Common myeloid progenitor, CD34-positive (primary cell): ENCODE measurements at regions of chr6 and their contacts with region 1.

Region 1: GRCh38 chr6:56902641-56903464 is 52.1 kb upstream of the BEND6 start:
- DNase-seq: peak; percentile 34 to 70 (median 61)
- H3K4me3 ChIP-seq: no peak overlapping the region
- H3K27ac ChIP-seq: no peak overlapping the region
- H3K4me1 ChIP-seq: peaks cover 0 to 1% (median 0%) of the 10 kb centered on the region in 4 experiments
- H3K27me3 ChIP-seq: no peaks in the 10 kb centered on the region

Region 2: DNA sequence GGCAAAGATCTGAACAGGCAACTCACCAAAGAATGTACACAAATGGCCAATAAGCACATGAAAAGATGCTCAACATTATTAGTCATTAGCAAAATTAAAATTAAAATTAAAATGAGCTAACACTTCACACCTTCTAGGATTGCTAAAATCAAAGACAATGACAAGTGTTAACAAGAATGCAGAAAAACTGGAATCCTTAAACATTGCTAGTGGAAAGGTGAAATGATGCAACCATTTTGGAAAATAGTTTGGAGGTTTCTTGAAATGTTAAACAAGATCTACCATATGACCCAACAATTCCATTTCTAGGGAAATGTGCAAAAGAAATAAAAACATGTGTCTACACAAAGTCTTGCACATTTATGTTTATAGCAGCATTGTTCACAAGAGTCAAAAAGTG is 184.6 kb before region 1 on chr6:
- CTCF ChIA-PET with region 1: no interaction called
- POLR2A ChIA-PET with region 1: no interaction called
- DNase-seq: no peak
- H3K4me3 ChIP-seq: no peak overlapping the region
- H3K27ac ChIP-seq: no peak overlapping the region
- H3K4me1 ChIP-seq: no peaks in the 10 kb centered on the region
- H3K27me3 ChIP-seq: no peaks in the 10 kb centered on the region

Region 3: GRCh38 chr6:56775498-56776166 is 127.2 kb before region 1 on chr6:
- CTCF ChIA-PET with region 1: no interaction called
- POLR2A ChIA-PET with region 1: no interaction called
- DNase-seq: no peak
- H3K4me3 ChIP-seq: no peak overlapping the region
- H3K27ac ChIP-seq: no peak overlapping the region
- H3K4me1 ChIP-seq: peaks cover 0 to 3% (median 1%) of the 10 kb centered on the region in 4 experiments
- H3K27me3 ChIP-seq: no peaks in the 10 kb centered on the region

Region 4: DNA sequence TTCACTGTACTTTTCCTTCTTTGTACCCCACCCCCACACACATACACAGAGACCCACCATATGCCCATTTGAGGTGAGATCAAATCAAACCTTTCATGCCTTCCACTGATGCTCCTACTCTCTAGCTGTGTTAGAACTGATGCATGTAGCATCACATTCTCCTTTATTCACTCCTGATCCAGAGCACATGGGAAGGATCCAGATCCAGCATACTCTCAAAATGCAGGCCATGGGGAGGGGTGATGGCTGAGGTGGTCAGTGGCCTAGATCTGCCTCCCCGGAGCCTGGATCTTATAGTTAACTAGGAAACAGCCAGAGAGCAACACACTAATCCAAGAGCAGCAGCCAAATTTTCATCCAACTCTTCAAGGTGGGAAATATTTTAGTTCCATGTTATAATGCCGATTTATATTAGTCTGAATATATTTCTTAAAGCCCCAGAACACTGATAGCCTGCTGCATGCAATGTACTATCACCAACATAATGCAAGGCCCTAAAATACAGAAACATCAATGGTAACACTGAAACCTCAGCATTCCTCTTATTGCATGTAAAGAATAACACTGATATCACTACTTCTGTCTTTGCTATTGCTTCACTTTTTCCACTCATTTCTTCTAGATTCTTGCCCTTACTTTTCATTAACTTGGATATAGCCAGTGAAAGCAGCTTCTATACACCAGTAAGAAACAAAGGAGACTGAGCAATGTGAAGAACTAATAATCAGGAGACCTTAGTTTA is 74.8 kb before region 1 on chr6:
- CTCF ChIA-PET with region 1: no interaction called
- POLR2A ChIA-PET with region 1: no interaction called
- DNase-seq: no peak
- H3K4me3 ChIP-seq: no peak overlapping the region
- H3K27ac ChIP-seq: no peak overlapping the region
- H3K4me1 ChIP-seq: no peaks in the 10 kb centered on the region
- H3K27me3 ChIP-seq: no peaks in the 10 kb centered on the region

Region 5: GRCh38 chr6:56890683-56891429 is 12.0 kb before region 1 on chr6:
- CTCF ChIA-PET with region 1: interaction called, 20 read pairs
- POLR2A ChIA-PET with region 1: no interaction called
- DNase-seq: peak; percentile 77 to 94 (median 91)
- H3K4me3 ChIP-seq: no peak overlapping the region
- H3K27ac ChIP-seq: no peak overlapping the region
- H3K4me1 ChIP-seq: peaks cover 0 to 15% (median 2%) of the 10 kb centered on the region in 4 experiments
- H3K27me3 ChIP-seq: no peaks in the 10 kb centered on the region

Region 6: GRCh38 chr6:56927538-56928453 is 24.9 kb after region 1 on chr6:
- CTCF ChIA-PET with region 1: interaction called, 14 read pairs
- POLR2A ChIA-PET with region 1: no interaction called
- DNase-seq: peak; percentile 29 to 64 (median 54)
- H3K4me3 ChIP-seq: no peak overlapping the region
- H3K27ac ChIP-seq: no peak overlapping the region
- H3K4me1 ChIP-seq: peaks cover 0 to 21% (median 12%) of the 10 kb centered on the region in 4 experiments
- H3K27me3 ChIP-seq: no peaks in the 10 kb centered on the region

Region 7: DNA sequence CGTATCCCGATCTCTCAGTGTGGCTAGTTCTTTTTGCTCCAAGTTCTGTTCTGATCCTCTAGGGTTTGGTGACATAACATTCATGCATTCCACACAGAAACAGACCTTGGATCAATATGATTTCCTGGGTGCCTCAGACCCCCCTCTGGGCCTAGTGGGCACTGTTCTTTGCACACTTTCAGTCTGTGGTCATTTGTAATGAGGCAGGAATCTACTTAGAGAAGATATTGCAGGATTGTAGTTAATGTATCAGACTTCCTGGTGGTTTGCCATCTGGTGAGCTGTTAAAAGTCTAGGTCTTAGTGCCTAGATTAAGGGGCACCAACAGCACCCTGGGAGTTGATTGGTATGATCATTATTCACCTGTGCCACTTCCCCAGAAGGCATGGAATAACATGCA is 59.6 kb after region 1 on chr6:
- CTCF ChIA-PET with region 1: interaction called, 62 read pairs
- POLR2A ChIA-PET with region 1: no interaction called
- DNase-seq: no peak
- H3K4me3 ChIP-seq: no peak overlapping the region
- H3K27ac ChIP-seq: no peak overlapping the region
- H3K4me1 ChIP-seq: no peaks in the 10 kb centered on the region
- H3K27me3 ChIP-seq: peaks cover 0 to 2% (median 0%) of the 10 kb centered on the region in 5 experiments

Region 8: GRCh38 chr6:57040009-57040408 is 137.2 kb after region 1 on chr6:
- CTCF ChIA-PET with region 1: interaction called, 10 read pairs
- POLR2A ChIA-PET with region 1: no interaction called
- DNase-seq: peak in 2 of 3 donors; percentile 18 to 23
- H3K4me3 ChIP-seq: no peak overlapping the region
- H3K27ac ChIP-seq: no peak overlapping the region
- H3K4me1 ChIP-seq: no peaks in the 10 kb centered on the region
- H3K27me3 ChIP-seq: no peaks in the 10 kb centered on the region